Sciatic nerve (tissue), 2 donors: ENCODE measurements at regions of chr4 and their contacts with region 1.

Region 1: GRCh38 chr4:24244663-24245490 is 339.5 kb downstream of the DHX15 start:
- DNase-seq: no peak
- ATAC-seq: peak; percentile 85

Region 2: GRCh38 chr4:22312113-22312512 is 1932.8 kb before region 1 on chr4:
- intact Hi-C with region 1: loop called (anchors 5 kb)
- DNase-seq: no peak
- ATAC-seq: no peak

Region 3: GRCh38 chr4:24190936-24191695 is 53.8 kb before region 1 on chr4:
- intact Hi-C with region 1: no loop called
- DNase-seq: no peak
- ATAC-seq: no peak